ENCODE measurements at regions of chr3 and their contacts with region 1.

Region 1: DNA sequence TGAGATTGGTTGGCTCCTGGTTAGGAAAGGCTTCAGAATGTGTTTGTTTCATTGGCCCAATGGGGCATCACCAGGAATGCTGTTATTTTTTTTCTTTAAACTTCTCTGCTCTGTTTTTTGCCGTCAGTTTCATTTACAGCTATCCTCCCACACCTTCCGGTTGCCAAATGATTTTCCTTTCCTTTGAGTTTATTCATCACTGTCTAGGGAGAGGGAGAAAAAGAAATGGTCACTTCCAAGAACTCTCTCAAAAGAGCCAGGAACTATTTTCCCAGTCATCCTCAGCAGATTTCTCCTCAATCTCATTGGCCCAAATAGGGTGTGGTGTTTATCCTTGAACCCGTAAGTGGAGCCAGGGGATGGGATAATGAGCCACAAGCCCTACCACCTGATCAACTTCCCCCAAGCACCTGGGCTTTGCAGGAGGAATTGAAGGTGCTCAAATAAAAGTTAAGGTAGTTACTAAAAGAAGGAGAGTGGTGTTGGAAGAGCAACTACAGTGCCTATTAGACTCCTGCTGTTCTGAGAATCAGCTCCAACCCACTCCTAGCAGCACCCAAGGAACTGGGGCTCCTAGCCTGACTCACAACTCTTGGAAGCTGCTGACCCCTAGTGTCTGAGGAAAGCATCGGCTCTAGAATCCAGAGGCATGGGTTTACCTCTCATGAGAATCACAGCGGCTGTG is 183.8 kb upstream of the IL12A start:
- DNase-seq: peak; percentile 32 to 51
- ATAC-seq: peak; percentile 85 to 93
- H3K4me3 ChIP-seq: no peak overlapping the region
- H3K27ac ChIP-seq: peak overlapping the region; percentile 5 to 47 (median 26)
- H3K4me1 ChIP-seq: peaks cover 0 to 6% of the 10 kb centered on the region in 2 donors
- H3K27me3 ChIP-seq: no peaks in the 10 kb centered on the region
- CTCF ChIP-seq: peak; percentile 65 to 88 (median 78)
- POLR2A ChIP-seq: no peak

Region 2: DNA sequence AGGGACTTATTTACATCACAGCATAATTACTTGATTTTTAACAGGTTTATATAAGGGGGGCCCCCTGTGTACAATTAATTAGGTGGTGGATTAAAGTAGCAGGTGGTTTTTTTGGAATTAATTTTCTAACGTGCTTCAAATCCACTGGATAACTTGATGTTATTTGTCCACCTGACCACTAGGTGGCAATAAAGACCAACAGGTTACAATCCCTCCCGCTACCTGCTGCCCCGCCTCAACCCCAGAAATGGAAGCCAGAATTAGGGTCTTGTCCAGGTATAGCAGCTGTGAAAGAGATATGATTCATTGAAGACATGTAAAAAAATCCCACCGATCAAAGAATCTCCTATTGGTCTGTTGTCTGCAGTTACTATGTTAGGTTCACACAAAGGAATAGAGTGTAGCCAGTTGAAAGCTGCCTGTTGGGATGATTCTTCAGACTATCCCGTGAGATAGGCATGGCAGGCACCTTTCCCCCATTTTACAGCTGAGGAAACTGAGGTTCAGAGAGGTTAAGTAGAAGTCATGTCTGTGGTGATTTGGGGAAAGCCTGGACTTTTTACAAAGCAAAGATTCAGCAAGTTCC is 959.0 kb before region 1 on chr3:
- in situ Hi-C with region 1: loop called in 2 of 4 experiments (anchors 25 kb)
- intact Hi-C with region 1: loop called (anchors 5 kb)
- DNase-seq: no peak
- ATAC-seq: no peak
- H3K4me3 ChIP-seq: no peak overlapping the region
- H3K27ac ChIP-seq: no peak overlapping the region
- H3K4me1 ChIP-seq: no peaks in the 10 kb centered on the region
- H3K27me3 ChIP-seq: no peaks in the 10 kb centered on the region
- CTCF ChIP-seq: peak; percentile 62 to 77 (median 68)
- POLR2A ChIP-seq: no peak

Region 3: GRCh38 chr3:159260049-159260662 is 544.7 kb before region 1 on chr3:
- in situ Hi-C with region 1: loop called in 2 of 4 experiments (anchors 10 to 25 kb)
- intact Hi-C with region 1: loop called (anchors 1 kb)
- DNase-seq: no peak
- ATAC-seq: no peak
- H3K4me3 ChIP-seq: no peak overlapping the region
- H3K27ac ChIP-seq: no peak overlapping the region
- H3K4me1 ChIP-seq: no peaks in the 10 kb centered on the region
- H3K27me3 ChIP-seq: no peaks in the 10 kb centered on the region
- CTCF ChIP-seq: peak; percentile 37 to 71 (median 61)
- POLR2A ChIP-seq: no peak

Region 4: DNA sequence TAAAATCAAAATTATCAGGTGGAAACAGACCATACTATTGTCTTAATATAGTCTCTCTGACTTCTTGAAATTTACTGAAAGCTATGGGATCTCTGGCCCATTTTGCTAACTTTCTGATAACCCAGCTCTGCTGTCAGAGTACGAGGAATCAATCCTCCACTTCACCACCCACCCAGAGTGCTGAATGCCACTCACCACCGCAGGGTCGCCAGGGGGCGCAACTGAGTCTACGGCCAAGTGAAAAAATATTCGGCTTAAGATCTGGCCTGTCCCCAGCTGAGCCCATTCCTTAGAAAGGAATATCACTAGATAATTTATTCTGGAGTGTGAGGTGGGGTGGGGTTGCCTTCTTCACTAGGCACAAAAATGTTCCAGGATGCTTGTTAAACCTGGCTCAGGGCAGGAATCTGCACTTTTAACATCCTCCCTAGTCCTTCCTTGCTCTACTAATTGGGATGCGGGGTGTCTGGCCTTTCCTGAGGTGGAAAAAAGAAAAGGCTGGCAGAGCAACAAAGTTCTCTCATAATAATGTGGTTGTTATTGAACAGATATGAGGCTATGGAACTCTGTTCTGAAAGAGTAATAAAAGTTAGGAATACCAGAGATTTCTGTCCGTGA is 482.4 kb before region 1 on chr3:
- in situ Hi-C with region 1: no loop called
- intact Hi-C with region 1: loop called (anchors 5 kb)
- DNase-seq: no peak
- ATAC-seq: no peak
- H3K4me3 ChIP-seq: no peak overlapping the region
- H3K27ac ChIP-seq: no peak overlapping the region
- H3K4me1 ChIP-seq: no peaks in the 10 kb centered on the region
- H3K27me3 ChIP-seq: no peaks in the 10 kb centered on the region
- CTCF ChIP-seq: peak; percentile 26 to 57 (median 32)
- POLR2A ChIP-seq: no peak

Region 5: DNA sequence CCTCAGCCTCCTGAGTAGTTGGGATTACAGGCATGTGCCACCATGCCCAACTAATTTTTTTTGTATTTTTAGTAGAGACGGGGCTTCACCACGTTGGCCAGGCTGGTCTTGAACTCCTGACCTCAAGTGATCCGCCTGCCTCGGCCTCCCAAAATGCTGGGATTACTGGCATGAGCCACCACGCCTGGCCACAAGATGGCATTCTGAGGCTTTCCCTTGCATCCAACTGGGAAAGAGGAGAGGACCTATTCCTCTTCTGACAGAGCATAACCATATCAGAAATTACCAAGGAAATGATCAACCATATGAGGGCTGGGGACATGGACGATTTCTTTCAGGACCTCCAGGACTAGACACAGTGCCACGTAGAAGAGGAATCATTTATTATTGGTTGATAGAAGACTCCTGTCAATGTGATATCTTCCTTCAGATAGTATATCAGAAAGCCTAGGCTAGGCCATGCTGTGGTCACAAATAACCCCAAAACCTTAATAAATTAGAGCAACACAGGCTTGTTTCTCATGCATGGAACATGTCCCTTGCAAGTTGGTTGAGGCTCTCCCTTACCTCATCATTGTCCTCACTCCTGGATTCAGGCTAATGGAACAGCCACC is 188.5 kb before region 1 on chr3:
- in situ Hi-C with region 1: loop called in 3 of 4 experiments (anchors 10 to 25 kb)
- intact Hi-C with region 1: loop called (anchors 1 kb)
- DNase-seq: no peak
- ATAC-seq: no peak
- H3K4me3 ChIP-seq: no peak overlapping the region
- H3K27ac ChIP-seq: no peak overlapping the region
- H3K4me1 ChIP-seq: no peaks in the 10 kb centered on the region
- H3K27me3 ChIP-seq: no peaks in the 10 kb centered on the region
- CTCF ChIP-seq: peak in 3 of 5 experiments; percentile 42 to 50 (median 48)
- POLR2A ChIP-seq: no peak

Region 6: GRCh38 chr3:159762238-159762637 is 42.6 kb before region 1 on chr3:
- in situ Hi-C with region 1: no loop called
- intact Hi-C with region 1: loop called (anchors 1 kb)
- DNase-seq: no peak
- ATAC-seq: no peak
- H3K4me3 ChIP-seq: no peak overlapping the region
- H3K27ac ChIP-seq: peak overlapping the region; percentile 80 to 87 (median 82)
- H3K4me1 ChIP-seq: peaks cover 16 to 27% of the 10 kb centered on the region in 2 donors
- H3K27me3 ChIP-seq: peaks cover 0 to 5% (median 0%) of the 10 kb centered on the region in 3 donors
- CTCF ChIP-seq: no peak
- POLR2A ChIP-seq: no peak